ENCODE measurements at regions of chr13 and their contacts with region 1.

Region 1: GRCh38 chr13:94435604-94436226 is 43.8 kb downstream of the DCT start:
- DNase-seq: no peak
- ATAC-seq: peak; percentile 46
- H3K4me3 ChIP-seq: no peak overlapping the region
- H3K4me1 ChIP-seq: no peaks in the 10 kb centered on the region
- CTCF ChIP-seq: peak; percentile 27

Region 2: DNA sequence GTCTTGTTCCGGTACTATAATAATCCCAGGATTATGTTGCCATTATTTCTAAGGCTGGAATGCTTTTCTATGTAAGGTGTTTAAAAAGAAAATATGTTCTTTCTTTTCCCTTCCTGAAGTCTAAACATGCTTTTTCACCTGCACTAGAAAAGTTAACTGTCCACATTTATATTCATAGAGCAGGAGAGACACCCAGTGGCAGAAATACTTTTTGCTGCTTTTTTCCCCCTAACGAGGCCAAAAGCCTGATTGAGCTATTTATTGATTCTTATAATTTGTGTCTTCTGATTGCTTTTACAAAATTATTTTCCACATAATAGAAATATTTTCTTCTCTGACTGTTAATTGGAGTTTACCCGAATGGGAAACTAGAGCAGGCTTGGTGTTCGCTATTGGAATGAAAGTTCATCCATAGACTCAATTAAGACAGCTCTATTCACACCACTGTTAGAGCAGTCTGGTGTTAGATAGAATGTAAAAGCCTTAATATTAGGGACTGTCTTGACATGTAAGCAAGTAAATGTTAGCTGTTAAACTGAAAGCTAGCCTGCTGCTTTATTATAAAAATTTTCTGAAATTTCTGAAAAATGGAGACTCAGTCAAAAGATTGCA is 181.8 kb after region 1 on chr13:
- intact Hi-C with region 1: loop called (anchors 2 to 5 kb)
- DNase-seq: peak in 1 of 3 donors; percentile 62
- ATAC-seq: peak; percentile 47
- H3K4me3 ChIP-seq: no peak overlapping the region
- H3K4me1 ChIP-seq: no peaks in the 10 kb centered on the region
- CTCF ChIP-seq: no peak